ENCODE measurements at regions of chr2 and their contacts with region 1.

Region 1: GRCh38 chr2:136052369-136053362 is 65.3 kb downstream of the CXCR4 start:
- DNase-seq: peak; percentile 46
- H3K4me3 ChIP-seq: no peak overlapping the region
- H3K27ac ChIP-seq: no peak overlapping the region
- H3K4me1 ChIP-seq: peaks cover 53% of the 10 kb centered on the region
- CTCF ChIP-seq: no peak

Region 2: GRCh38 chr2:136034629-136035028 is 18.0 kb before region 1 on chr2:
- CTCF ChIA-PET with region 1: interaction called, 9 read pairs
- POLR2A ChIA-PET with region 1: interaction called, 10 read pairs
- intact Hi-C with region 1: no loop called
- DNase-seq: no peak
- H3K4me3 ChIP-seq: no peak overlapping the region
- H3K27ac ChIP-seq: no peak overlapping the region
- H3K4me1 ChIP-seq: no peaks in the 10 kb centered on the region
- CTCF ChIP-seq: no peak